Calu3 (cell line): ENCODE measurements at regions of chr12 and their contacts with region 1.

Region 1: GRCh38 chr12:69290545-69291277 is 51.3 kb downstream of the CPSF6 start:
- DNase-seq: peak; percentile 88
- H3K4me3 Mint-ChIP-seq: no peak overlapping the region
- H3K27ac Mint-ChIP-seq: no peak overlapping the region
- H3K4me1 Mint-ChIP-seq: peaks cover 11% of the 10 kb centered on the region
- H3K27me3 Mint-ChIP-seq: no peaks in the 10 kb centered on the region
- CTCF ChIP-seq: peak; percentile 99

Region 2: GRCh38 chr12:69108037-69108645 is 182.6 kb before region 1 on chr12:
- CTCF ChIA-PET with region 1: no interaction called
- intact Hi-C with region 1: no loop called
- DNase-seq: peak; percentile 11
- H3K4me3 Mint-ChIP-seq: no peak overlapping the region
- H3K27ac Mint-ChIP-seq: no peak overlapping the region
- H3K4me1 Mint-ChIP-seq: peaks cover 9% of the 10 kb centered on the region
- H3K27me3 Mint-ChIP-seq: no peaks in the 10 kb centered on the region
- CTCF ChIP-seq: no peak

Region 3: GRCh38 chr12:69196302-69197288 is 94.1 kb before region 1 on chr12:
- CTCF ChIA-PET with region 1: no interaction called
- intact Hi-C with region 1: no loop called
- DNase-seq: peak; percentile 41
- H3K4me3 Mint-ChIP-seq: no peak overlapping the region
- H3K27ac Mint-ChIP-seq: no peak overlapping the region
- H3K4me1 Mint-ChIP-seq: no peaks in the 10 kb centered on the region
- H3K27me3 Mint-ChIP-seq: peaks cover 22% of the 10 kb centered on the region
- CTCF ChIP-seq: peak; percentile 20

Region 4: GRCh38 chr12:69330475-69331473 is 40.1 kb after region 1 on chr12:
- CTCF ChIA-PET with region 1: interaction called, 3 read pairs
- intact Hi-C with region 1: loop called (anchors 5 kb)
- DNase-seq: peak; percentile 49
- H3K4me3 Mint-ChIP-seq: peak overlapping the region; percentile 82
- H3K27ac Mint-ChIP-seq: peak overlapping the region; percentile 90
- H3K4me1 Mint-ChIP-seq: peaks cover 51% of the 10 kb centered on the region
- H3K27me3 Mint-ChIP-seq: no peaks in the 10 kb centered on the region
- CTCF ChIP-seq: no peak

Region 5: DNA sequence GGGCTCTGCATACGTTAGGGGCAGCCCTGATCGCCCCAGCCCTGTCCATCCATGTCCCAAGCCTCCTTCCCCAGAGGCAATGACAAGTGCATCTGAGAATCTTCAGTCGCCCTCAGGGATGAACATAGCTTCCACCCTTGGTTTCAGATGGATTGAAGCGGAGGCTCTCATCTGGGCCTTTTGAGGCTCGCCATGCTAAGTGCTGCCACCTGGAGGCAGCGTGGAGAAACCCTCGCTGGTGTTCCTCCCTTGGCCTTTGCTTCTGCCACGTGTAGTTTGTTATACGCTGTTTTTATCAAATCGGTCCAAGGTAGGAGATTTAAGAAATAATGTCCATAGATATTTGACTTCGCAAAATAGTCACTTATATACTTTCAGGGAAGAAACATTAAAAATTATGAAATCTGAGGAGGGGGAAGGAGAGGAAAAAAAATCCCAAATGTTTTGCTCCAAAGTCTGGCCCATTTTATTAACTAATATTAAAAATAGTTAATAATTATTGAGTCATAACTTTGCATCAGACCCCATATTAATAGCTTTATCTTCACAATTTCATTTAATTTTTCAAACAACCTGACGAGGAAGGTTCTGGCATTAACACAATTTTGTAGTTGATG is 348.8 kb after region 1 on chr12:
- CTCF ChIA-PET with region 1: interaction called, 3 read pairs
- intact Hi-C with region 1: loop called (anchors 2 kb)
- DNase-seq: peak; percentile 75
- H3K4me3 Mint-ChIP-seq: no peak overlapping the region
- H3K27ac Mint-ChIP-seq: no peak overlapping the region
- H3K4me1 Mint-ChIP-seq: no peaks in the 10 kb centered on the region
- H3K27me3 Mint-ChIP-seq: no peaks in the 10 kb centered on the region
- CTCF ChIP-seq: peak; percentile 79